Heart left ventricle (tissue), 16 donors: ENCODE measurements at regions of chr11 and their contacts with region 1.

Region 1: GRCh38 chr11:65516135-65516935 is 8.5 kb upstream of the SCYL1 start:
- DNase-seq: peak in 1 of 5 donors; percentile 5
- ATAC-seq: peak in 1 of 4 donors; percentile 4
- H3K4me3 ChIP-seq: no peak overlapping the region
- H3K27ac ChIP-seq: no peak overlapping the region
- H3K4me1 ChIP-seq: no peaks in the 10 kb centered on the region
- H3K27me3 ChIP-seq: no peaks in the 10 kb centered on the region
- CTCF ChIP-seq: no peak
- POLR2A ChIP-seq: no peak

Region 2: DNA sequence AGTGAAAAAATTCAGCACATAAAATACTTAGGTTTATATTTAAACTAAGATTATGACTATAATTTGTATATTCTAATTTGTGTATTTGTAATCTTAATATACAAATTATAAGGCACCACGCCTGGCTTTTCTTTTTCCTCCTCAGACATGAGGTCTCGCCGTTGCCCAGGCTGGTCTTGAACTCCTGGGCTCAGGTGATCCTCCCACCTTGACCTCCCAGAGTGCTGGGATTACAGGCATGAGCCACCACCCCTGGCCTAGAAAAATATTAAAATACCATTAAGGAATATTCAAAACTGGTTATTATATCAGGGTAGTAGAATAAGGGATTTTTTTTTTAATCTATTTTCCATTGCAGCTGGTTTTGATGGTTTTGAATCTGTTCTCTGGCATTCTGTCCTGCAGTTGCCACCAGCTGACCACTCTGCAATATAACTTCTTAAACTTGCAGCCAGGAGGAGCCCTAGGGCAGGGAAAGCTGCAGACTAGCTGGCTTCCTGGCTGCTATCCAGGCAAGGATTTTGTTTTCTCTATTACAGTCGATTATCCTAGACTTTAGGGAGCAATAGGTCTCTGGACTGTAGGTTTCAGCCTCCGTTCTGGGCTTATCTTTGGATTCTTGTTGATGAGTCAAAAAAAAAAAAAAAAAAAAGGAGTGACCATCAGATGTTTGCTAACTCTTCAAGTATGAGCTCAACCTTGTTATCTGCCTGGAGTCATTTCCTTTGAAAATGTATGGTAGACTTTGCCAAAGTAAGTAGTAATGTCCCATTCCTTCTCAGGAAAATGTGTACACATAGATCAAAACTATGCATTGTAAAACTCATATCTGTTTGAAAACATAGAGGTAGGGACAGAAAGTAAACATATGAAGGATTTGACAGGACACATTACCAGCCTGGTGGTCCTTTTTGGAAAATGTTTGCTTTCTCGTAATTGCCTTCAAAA is 241.3 kb before region 1 on chr11:
- intact Hi-C with region 1: loop called in 1 of 10 experiments (anchors 10 kb)
- DNase-seq: peak; percentile 72 to 89 (median 81)
- ATAC-seq: peak; percentile 75 to 93 (median 89)
- H3K4me3 ChIP-seq: no peak overlapping the region
- H3K27ac ChIP-seq: peak overlapping the region in 10 of 12 donors; percentile 31 to 58 (median 51)
- H3K4me1 ChIP-seq: peaks cover 0 to 28% (median 11%) of the 10 kb centered on the region in 12 donors
- H3K27me3 ChIP-seq: no peaks in the 10 kb centered on the region
- CTCF ChIP-seq: peak; percentile 62 to 89 (median 81)
- POLR2A ChIP-seq: no peak

Region 3: DNA sequence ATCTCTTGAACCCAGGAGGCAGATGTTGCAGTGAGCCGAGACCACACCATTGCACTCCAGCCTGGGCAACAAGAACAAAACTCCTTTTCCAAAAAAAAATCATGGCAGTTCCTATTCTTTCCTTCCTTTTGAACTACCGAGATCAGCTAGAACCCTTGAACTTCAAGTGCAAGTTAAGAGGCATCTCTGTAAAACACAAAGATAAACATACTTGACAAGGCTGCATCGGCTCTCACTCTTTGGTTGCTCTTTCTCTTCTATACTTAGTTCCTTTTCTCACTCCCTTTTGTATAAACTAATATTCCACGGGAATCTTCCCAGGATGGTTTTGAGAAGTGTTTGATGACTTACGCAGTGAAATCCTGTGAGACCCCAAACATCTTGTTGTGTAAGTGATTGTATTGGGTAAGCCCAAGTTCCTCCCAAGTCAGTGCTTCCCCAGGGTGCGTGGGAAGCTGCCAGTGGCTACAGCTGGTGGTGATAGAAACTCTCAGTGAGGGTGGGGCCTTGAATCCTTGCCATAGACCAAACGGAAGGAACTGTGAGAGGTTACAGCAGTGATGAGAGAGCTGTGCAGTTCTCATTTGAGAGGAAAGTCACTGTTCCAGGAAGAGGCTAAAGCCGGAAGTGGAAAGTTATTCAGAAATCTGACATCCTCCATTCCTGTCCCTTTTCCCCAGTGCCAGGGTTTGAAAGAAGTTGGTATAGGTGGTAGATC is 225.7 kb before region 1 on chr11:
- intact Hi-C with region 1: no loop called
- DNase-seq: peak; percentile 92 to 96 (median 95)
- ATAC-seq: peak; percentile 83 to 94 (median 90)
- H3K4me3 ChIP-seq: peak overlapping the region in 3 of 12 donors; percentile 5 to 18 (median 7)
- H3K27ac ChIP-seq: peak overlapping the region; percentile 69 to 92 (median 80)
- H3K4me1 ChIP-seq: peaks cover 6 to 67% (median 44%) of the 10 kb centered on the region in 12 donors
- H3K27me3 ChIP-seq: no peaks in the 10 kb centered on the region
- CTCF ChIP-seq: no peak
- POLR2A ChIP-seq: no peak

Region 4: GRCh38 chr11:65366340-65366773 is 150.0 kb before region 1 on chr11:
- intact Hi-C with region 1: loop called in 7 of 10 experiments (anchors 2 to 5 kb)
- DNase-seq: no peak
- ATAC-seq: peak; percentile 38 to 71 (median 66)
- H3K4me3 ChIP-seq: no peak overlapping the region
- H3K27ac ChIP-seq: peak overlapping the region in 11 of 12 donors; percentile 19 to 77 (median 63)
- H3K4me1 ChIP-seq: peaks cover 0 to 31% (median 14%) of the 10 kb centered on the region in 12 donors
- H3K27me3 ChIP-seq: no peaks in the 10 kb centered on the region
- CTCF ChIP-seq: peak; percentile 66 to 85 (median 78)
- POLR2A ChIP-seq: no peak

Region 5: DNA sequence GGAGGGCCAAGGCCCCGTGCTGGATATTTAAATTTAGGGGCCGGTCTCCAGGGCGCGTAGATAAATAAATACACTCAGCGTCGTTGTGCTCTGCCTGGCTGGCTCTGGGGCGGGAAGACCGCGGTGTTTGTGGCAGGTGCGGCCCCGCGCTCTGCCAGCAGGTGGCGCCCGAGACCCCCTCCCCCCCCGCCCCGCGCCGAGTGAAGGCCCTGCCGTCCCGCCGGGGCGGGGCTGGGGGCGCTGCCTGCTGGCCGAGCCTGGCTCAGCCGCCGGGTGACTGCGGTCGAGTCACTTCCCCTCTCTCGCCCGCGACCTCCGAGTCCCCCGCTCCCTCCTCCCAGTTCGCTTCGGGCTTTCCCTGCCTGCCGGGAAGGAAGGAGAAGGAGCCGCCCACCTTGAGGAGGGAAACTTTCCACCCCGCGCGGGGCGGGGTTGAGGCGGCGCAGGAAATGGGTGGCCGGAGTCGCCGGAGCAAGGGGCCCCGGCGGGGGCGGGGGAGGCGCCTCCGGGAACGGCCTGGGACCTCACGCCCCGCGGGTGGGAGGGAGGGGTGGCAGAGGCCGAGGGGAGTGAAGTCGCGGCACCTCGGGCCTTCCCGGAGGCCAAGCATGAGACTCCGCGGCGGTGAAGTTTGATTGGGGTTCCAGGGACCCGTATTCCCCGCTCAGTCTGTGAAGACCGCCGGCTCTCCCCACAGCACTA is 57.9 kb after region 1 on chr11:
- intact Hi-C with region 1: no loop called
- DNase-seq: peak; percentile 96 to 98 (median 97)
- ATAC-seq: peak; percentile 18 to 67 (median 59)
- H3K4me3 ChIP-seq: peak overlapping the region; percentile 1 to 96 (median 78)
- H3K27ac ChIP-seq: peak overlapping the region; percentile 89 to 99 (median 96)
- H3K4me1 ChIP-seq: peaks cover 17 to 86% (median 68%) of the 10 kb centered on the region in 12 donors
- H3K27me3 ChIP-seq: peaks cover 0 to 6% (median 0%) of the 10 kb centered on the region in 9 donors
- CTCF ChIP-seq: peak; percentile 93 to 100 (median 98)
- POLR2A ChIP-seq: peak in 1 of 2 donors; percentile 42